ENCODE measurements at regions of chr4 and their contacts with region 1.

Region 1: GRCh38 chr4:120144634-120145033 is 78.0 kb upstream of the MAD2L1 start:
- DNase-seq: no peak
- H3K4me3 ChIP-seq: no peak overlapping the region
- H3K4me3 Mint-ChIP-seq: no peak overlapping the region
- H3K27ac Mint-ChIP-seq: no peak overlapping the region
- H3K4me1 ChIP-seq: no peaks in the 10 kb centered on the region
- H3K4me1 Mint-ChIP-seq: no peaks in the 10 kb centered on the region
- H3K27me3 ChIP-seq: no peaks in the 10 kb centered on the region
- H3K27me3 Mint-ChIP-seq: no peaks in the 10 kb centered on the region
- CTCF ChIP-seq: no peak

Region 2: GRCh38 chr4:120071192-120071795 is 73.3 kb before region 1 on chr4:
- CTCF ChIA-PET with region 1: no interaction called
- POLR2A ChIA-PET with region 1: no interaction called
- intact Hi-C with region 1: loop called (anchors 5 kb)
- DNase-seq: peak; percentile 37 to 42
- H3K4me3 ChIP-seq: no peak overlapping the region
- H3K4me3 Mint-ChIP-seq: no peak overlapping the region
- H3K27ac Mint-ChIP-seq: no peak overlapping the region
- H3K4me1 ChIP-seq: peaks cover 5% of the 10 kb centered on the region; the same call in 1 of the 2 replicates
- H3K4me1 Mint-ChIP-seq: no peaks in the 10 kb centered on the region
- H3K27me3 ChIP-seq: no peaks in the 10 kb centered on the region
- H3K27me3 Mint-ChIP-seq: no peaks in the 10 kb centered on the region
- CTCF ChIP-seq: peak; percentile 38 to 65

Measured in Caco-2 (cell line).